Endothelial cell of umbilical vein (primary cell): ENCODE measurements at regions of chr14 and their contacts with region 1.

Region 1: DNA sequence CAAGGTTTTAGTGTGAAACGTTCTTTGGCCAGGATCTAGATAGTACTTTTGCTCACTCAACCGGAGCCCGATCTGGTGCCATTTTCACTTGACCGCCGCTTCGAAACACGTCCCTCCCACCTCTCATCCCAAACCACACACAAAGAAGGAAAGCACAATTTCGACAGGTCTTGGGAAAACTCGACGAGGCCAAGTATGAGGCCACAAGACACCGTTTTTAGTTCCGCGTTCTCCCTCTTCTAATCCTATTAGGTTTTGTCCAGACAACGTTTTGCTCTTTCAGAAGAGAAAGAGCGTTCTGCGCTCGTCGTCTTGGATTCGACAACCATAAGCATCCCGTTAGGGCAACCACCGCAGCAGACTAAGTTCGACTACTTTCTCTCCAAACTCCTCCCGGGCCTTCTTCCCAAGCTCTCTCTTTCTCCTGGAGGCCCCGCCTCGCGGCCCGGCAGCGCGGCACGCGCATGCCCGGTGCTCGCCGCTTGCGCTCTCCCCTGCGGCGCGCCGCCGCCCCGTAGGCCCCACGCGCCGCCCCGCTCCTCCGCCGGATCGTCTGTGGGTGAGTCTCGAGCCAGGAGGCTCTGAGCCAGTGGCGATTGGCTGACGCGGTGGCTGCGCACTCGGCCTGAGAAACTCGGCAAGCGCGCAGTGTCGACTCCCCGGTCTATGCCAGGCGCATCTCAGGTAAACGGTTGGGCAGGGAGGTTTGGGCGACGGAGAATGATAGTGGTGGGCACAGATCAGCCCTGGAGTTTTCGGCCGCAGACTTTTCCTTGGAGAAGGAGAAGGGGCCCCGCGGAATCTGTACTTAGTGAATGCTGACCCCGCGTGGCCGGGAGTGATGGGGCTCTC is at the start of gene MIPOL1:
- DNase-seq: peak; percentile 93
- H3K4me3 ChIP-seq: peak within 1 kb of the TSS; percentile 61 to 86 (median 86)
- H3K27ac ChIP-seq: peak within 1 kb of the TSS; percentile 97
- H3K4me1 ChIP-seq: peaks cover 52% of the 10 kb centered on the region
- H3K27me3 ChIP-seq: no peaks in the 10 kb centered on the region
- CTCF ChIP-seq: peak in 1 of 2 donors; percentile 49
- POLR2A ChIP-seq: peak; percentile 92
- total RNA-seq, gene MIPOL1: 31.3 and 33.5 TPM in 2 replicates

Region 2: GRCh38 chr14:36361210-36361853 is 836.3 kb before region 1 on chr14:
- CTCF ChIA-PET with region 1: no interaction called
- POLR2A ChIA-PET with region 1: no interaction called
- dilution Hi-C with region 1: no loop called
- intact Hi-C with region 1: no loop called
- DNase-seq: no peak
- H3K4me3 ChIP-seq: no peak overlapping the region
- H3K27ac ChIP-seq: no peak overlapping the region
- H3K4me1 ChIP-seq: no peaks in the 10 kb centered on the region
- H3K27me3 ChIP-seq: peaks cover 3 to 6% of the 10 kb centered on the region in 2 experiments
- CTCF ChIP-seq: no peak
- POLR2A ChIP-seq: no peak

Region 3: GRCh38 chr14:37034410-37035285 is 163.0 kb before region 1 on chr14:
- CTCF ChIA-PET with region 1: no interaction called
- POLR2A ChIA-PET with region 1: no interaction called
- dilution Hi-C with region 1: no loop called
- intact Hi-C with region 1: no loop called
- DNase-seq: no peak
- H3K4me3 ChIP-seq: no peak overlapping the region
- H3K27ac ChIP-seq: no peak overlapping the region
- H3K4me1 ChIP-seq: peaks cover 28% of the 10 kb centered on the region
- H3K27me3 ChIP-seq: no peaks in the 10 kb centered on the region
- CTCF ChIP-seq: no peak
- POLR2A ChIP-seq: no peak

Region 4: GRCh38 chr14:37048666-37049071 is 149.0 kb before region 1 on chr14:
- CTCF ChIA-PET with region 1: no interaction called
- POLR2A ChIA-PET with region 1: no interaction called
- dilution Hi-C with region 1: no loop called
- intact Hi-C with region 1: loop called (anchors 5 kb)
- DNase-seq: peak; percentile 33
- H3K4me3 ChIP-seq: no peak overlapping the region
- H3K27ac ChIP-seq: no peak overlapping the region
- H3K4me1 ChIP-seq: peaks cover 39% of the 10 kb centered on the region
- H3K27me3 ChIP-seq: no peaks in the 10 kb centered on the region
- CTCF ChIP-seq: no peak
- POLR2A ChIP-seq: no peak

Region 5: GRCh38 chr14:37172024-37172869 is 25.4 kb before region 1 on chr14 and contains the start of gene SLC25A21:
- CTCF ChIA-PET with region 1: interaction called, 13 read pairs
- POLR2A ChIA-PET with region 1: no interaction called
- dilution Hi-C with region 1: no loop called
- intact Hi-C with region 1: loop called (anchors 1 kb)
- DNase-seq: peak; percentile 92
- H3K4me3 ChIP-seq: peak within 1 kb of the TSS; percentile 57 to 81 (median 62)
- H3K27ac ChIP-seq: peak within 1 kb of the TSS; percentile 85
- H3K4me1 ChIP-seq: peaks cover 12% of the 10 kb centered on the region
- H3K27me3 ChIP-seq: no peaks in the 10 kb centered on the region
- CTCF ChIP-seq: peak in 1 of 2 donors; percentile 40
- POLR2A ChIP-seq: peak; percentile 58
- total RNA-seq, gene SLC25A21: 0.92 and 1.4 TPM in 2 replicates

Region 6: GRCh38 chr14:37210448-37210847 is 12.8 kb after region 1 on chr14:
- CTCF ChIA-PET with region 1: interaction called, 7 read pairs
- POLR2A ChIA-PET with region 1: interaction called, 9 read pairs
- dilution Hi-C with region 1: no loop called
- intact Hi-C with region 1: loop called (anchors 1 kb)
- DNase-seq: no peak
- H3K4me3 ChIP-seq: no peak overlapping the region
- H3K27ac ChIP-seq: no peak overlapping the region
- H3K4me1 ChIP-seq: peaks cover 33% of the 10 kb centered on the region
- H3K27me3 ChIP-seq: no peaks in the 10 kb centered on the region
- CTCF ChIP-seq: no peak
- POLR2A ChIP-seq: no peak